ENCODE measurements at regions of chr2 and their contacts with region 1.

Region 1: GRCh38 chr2:218870984-218871344 is 9.7 kb upstream of the WNT10A start:
- DNase-seq: no peak
- H3K4me3 ChIP-seq: no peak overlapping the region
- H3K27ac ChIP-seq: no peak overlapping the region
- H3K4me1 ChIP-seq: no peaks in the 10 kb centered on the region
- H3K27me3 ChIP-seq: no peaks in the 10 kb centered on the region
- CTCF ChIP-seq: no peak

Region 2: DNA sequence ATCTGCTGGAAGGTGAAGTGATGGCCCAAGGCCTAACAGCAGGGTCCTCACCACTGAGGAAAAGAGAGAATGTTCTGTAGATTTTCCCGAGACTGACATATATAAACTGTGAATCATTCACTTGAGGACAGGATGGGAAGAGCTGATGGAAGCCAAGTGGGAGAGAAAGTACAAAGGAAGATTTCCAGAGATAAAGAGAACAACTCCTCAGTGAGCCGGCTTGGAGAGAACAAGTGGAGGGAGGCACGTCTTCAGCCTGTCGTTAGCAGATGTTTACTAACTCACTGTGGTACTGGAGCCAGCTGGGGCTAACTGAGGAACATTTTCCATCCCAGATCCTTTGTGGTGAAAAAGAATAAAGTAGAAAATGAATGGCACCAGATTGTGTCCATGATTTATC is 1458.2 kb before region 1 on chr2:
- CTCF ChIA-PET with region 1: no interaction called
- POLR2A ChIA-PET with region 1: interaction called, 23 read pairs
- intact Hi-C with region 1: no loop called
- DNase-seq: no peak
- H3K4me3 ChIP-seq: no peak overlapping the region
- H3K27ac ChIP-seq: no peak overlapping the region
- H3K4me1 ChIP-seq: no peaks in the 10 kb centered on the region
- H3K27me3 ChIP-seq: no peaks in the 10 kb centered on the region
- CTCF ChIP-seq: no peak

Region 3: DNA sequence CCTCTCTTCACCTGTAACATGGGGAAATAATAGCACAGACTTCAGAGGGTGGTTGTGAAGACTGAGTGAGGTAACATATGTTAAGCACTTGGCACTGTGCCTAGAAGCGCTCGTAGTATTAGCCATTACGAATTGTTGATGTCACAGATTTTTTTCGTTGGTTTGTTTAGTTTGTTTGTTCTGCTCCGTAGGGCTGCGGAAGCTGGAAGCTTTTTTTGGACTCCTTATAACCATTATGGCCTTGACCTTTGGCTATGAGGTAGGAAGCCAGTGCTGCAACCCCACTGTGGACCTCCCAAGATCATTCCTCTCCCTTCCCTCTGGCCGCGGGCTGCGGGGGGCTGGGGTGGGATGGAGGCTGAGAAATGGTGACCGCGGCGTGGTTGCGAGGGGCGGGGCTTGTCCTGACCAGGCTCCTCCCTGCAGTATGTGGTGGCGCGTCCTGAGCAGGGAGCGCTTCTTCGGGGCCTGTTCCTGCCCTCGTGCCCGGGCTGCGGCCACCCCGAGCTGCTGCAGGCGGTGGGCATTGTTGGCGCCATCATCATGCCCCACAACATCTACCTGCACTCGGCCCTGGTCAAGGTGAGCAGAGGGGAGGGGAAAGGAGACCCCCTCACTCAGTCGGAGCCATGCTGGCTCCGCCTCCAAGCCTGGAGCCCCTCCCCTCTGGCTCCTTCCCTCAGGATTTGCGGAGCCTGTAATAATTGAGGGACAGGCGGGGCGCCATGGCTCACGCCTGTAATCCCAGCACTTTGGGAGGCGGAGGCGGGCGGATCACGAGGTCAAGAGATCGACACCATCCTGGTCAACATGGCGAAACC is 483.4 kb before region 1 on chr2:
- CTCF ChIA-PET with region 1: no interaction called
- POLR2A ChIA-PET with region 1: no interaction called
- intact Hi-C with region 1: no loop called
- DNase-seq: peak; percentile 59 to 72
- H3K4me3 ChIP-seq: peak overlapping the region; percentile 51; the same call in 1 of the 2 replicates
- H3K27ac ChIP-seq: 0 out of 2 replicates have a peak overlapping the region, but pooled peaks have one; percentile 23
- H3K4me1 ChIP-seq: no peaks in the 10 kb centered on the region
- H3K27me3 ChIP-seq: no peaks in the 10 kb centered on the region
- CTCF ChIP-seq: no peak

Region 4: GRCh38 chr2:218858671-218859555 is 12.1 kb before region 1 on chr2:
- CTCF ChIA-PET with region 1: interaction called, 10 read pairs
- POLR2A ChIA-PET with region 1: no interaction called
- intact Hi-C with region 1: no loop called
- DNase-seq: no peak
- H3K4me3 ChIP-seq: peak overlapping the region; percentile 52; the same call in 1 of the 2 replicates
- H3K27ac ChIP-seq: no peak overlapping the region
- H3K4me1 ChIP-seq: peaks cover 20% of the 10 kb centered on the region
- H3K27me3 ChIP-seq: peaks cover 13% of the 10 kb centered on the region; the same call in 1 of the 2 replicates
- CTCF ChIP-seq: no peak

Region 5: GRCh38 chr2:218953481-218953881 is 82.5 kb after region 1 on chr2:
- CTCF ChIA-PET with region 1: no interaction called
- POLR2A ChIA-PET with region 1: no interaction called
- intact Hi-C with region 1: no loop called
- DNase-seq: no peak
- H3K4me3 ChIP-seq: no peak overlapping the region
- H3K27ac ChIP-seq: no peak overlapping the region
- H3K4me1 ChIP-seq: peaks cover 7% of the 10 kb centered on the region; the same call in 1 of the 2 replicates
- H3K27me3 ChIP-seq: no peaks in the 10 kb centered on the region
- CTCF ChIP-seq: no peak; the same call in 1 of the 2 replicates